ENCODE measurements at regions of chr6 and their contacts with region 1.

Region 1: GRCh38 chr6:69835414-69836179 is 30.8 kb upstream of the COL19A1 start:
- DNase-seq: no peak
- ATAC-seq: peak; percentile 88
- H3K4me3 Mint-ChIP-seq: no peak overlapping the region
- H3K27ac Mint-ChIP-seq: peak overlapping the region; percentile 57
- H3K4me1 Mint-ChIP-seq: peaks cover 20% of the 10 kb centered on the region
- H3K27me3 Mint-ChIP-seq: no peaks in the 10 kb centered on the region
- CTCF ChIP-seq: peak; percentile 81

Region 2: GRCh38 chr6:69732640-69733039 is 103.0 kb before region 1 on chr6:
- CTCF ChIA-PET with region 1: no interaction called
- POLR2A ChIA-PET with region 1: no interaction called
- intact Hi-C with region 1: loop called (anchors 1 kb)
- DNase-seq: no peak
- ATAC-seq: peak; percentile 64
- H3K4me3 Mint-ChIP-seq: no peak overlapping the region
- H3K27ac Mint-ChIP-seq: no peak overlapping the region
- H3K4me1 Mint-ChIP-seq: peaks cover 13% of the 10 kb centered on the region
- H3K27me3 Mint-ChIP-seq: no peaks in the 10 kb centered on the region
- CTCF ChIP-seq: no peak

Region 3: GRCh38 chr6:69756366-69756765 is 79.2 kb before region 1 on chr6:
- CTCF ChIA-PET with region 1: no interaction called
- POLR2A ChIA-PET with region 1: no interaction called
- intact Hi-C with region 1: no loop called
- DNase-seq: no peak
- ATAC-seq: no peak
- H3K4me3 Mint-ChIP-seq: no peak overlapping the region
- H3K27ac Mint-ChIP-seq: no peak overlapping the region
- H3K4me1 Mint-ChIP-seq: peaks cover 46% of the 10 kb centered on the region
- H3K27me3 Mint-ChIP-seq: no peaks in the 10 kb centered on the region
- CTCF ChIP-seq: no peak

Region 4: DNA sequence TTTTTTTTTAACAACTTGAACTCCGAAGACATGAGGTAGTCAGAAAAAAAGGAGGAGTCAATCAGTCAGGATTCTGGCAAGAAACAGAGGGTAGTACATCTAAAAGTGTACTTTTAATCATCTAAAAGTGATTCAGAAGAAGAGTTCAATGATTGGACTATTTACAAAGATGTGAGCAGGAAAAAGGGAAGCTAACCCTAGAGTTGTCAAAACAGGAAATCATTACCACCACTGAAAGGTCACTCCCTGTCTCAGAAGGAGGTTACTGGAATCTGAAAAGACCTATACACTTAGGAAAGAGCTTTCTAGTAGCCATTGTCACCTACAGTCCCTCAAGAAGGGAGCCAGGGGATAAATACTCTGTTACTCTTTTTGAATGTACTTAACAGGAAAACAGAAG is 22.1 kb before region 1 on chr6:
- CTCF ChIA-PET with region 1: interaction called, 4 read pairs
- POLR2A ChIA-PET with region 1: interaction called, 3 read pairs
- intact Hi-C with region 1: loop called (anchors 1 kb)
- DNase-seq: no peak
- ATAC-seq: peak; percentile 56
- H3K4me3 Mint-ChIP-seq: peak overlapping the region; percentile 56
- H3K27ac Mint-ChIP-seq: peak overlapping the region; percentile 97
- H3K4me1 Mint-ChIP-seq: peaks cover 79% of the 10 kb centered on the region
- H3K27me3 Mint-ChIP-seq: no peaks in the 10 kb centered on the region
- CTCF ChIP-seq: no peak

Region 5: DNA sequence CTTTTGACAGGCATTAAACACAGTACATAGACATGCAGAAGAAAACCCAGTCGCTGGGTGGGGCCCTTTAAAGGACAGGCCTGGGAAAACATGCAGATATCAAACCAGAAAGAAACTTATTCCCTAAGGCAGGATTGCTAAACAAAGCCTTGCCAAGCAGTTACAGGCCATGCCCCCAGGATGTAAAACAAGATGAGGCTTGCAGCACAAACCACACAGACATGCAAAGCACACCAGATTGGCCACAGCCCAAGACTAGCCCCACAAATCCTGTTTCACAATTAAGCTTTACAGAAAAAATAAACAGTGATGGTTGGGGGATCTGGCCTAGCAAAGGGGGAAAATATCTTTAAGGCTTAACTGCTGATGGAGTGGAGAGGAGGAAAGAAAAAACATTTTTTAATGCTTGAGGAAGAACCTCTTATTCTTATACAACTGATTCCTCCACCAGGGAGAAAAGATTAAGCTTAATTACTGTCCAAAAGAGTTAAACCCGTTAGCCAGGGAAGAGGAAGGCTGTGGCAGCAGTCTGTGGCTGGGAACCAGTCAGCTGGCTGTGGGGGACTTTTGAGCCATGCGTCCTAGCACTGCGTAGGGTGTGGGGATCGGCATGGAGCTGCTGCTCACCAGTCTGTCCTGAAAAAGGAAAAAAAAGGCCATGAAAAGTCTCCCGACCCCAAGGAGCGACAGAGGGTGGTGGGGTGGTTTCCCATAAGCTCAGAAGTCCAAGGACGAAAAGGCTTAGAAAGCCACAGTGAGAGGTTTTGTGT is 59.2 kb after region 1 on chr6:
- CTCF ChIA-PET with region 1: no interaction called
- POLR2A ChIA-PET with region 1: no interaction called
- intact Hi-C with region 1: no loop called
- DNase-seq: no peak
- ATAC-seq: peak; percentile 49
- H3K4me3 Mint-ChIP-seq: peak overlapping the region; percentile 32
- H3K27ac Mint-ChIP-seq: peak overlapping the region; percentile 71
- H3K4me1 Mint-ChIP-seq: peaks cover 57% of the 10 kb centered on the region
- H3K27me3 Mint-ChIP-seq: no peaks in the 10 kb centered on the region
- CTCF ChIP-seq: no peak

Region 6: DNA sequence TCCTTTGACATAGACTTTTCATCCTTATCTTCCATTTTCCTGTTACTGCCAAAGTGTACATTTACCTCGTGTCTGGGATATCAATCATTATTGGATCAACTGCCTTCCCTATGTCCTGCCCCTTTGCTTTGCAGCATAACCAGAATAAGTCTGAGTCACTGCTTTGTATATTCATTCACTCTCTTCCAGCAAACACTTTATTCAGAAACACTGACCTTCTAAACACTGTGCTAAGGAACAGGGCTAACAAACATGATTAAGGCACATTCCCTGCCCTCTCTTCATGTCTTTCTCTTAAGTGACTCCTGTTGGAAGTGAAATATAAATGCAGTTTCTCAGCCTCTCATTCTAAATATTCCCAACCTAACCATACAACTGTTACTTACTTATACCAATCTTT is 97.6 kb after region 1 on chr6:
- CTCF ChIA-PET with region 1: no interaction called
- POLR2A ChIA-PET with region 1: no interaction called
- intact Hi-C with region 1: loop called (anchors 1 kb)
- DNase-seq: no peak
- ATAC-seq: no peak
- H3K4me3 Mint-ChIP-seq: no peak overlapping the region
- H3K27ac Mint-ChIP-seq: peak overlapping the region; percentile 8
- H3K4me1 Mint-ChIP-seq: peaks cover 13% of the 10 kb centered on the region
- H3K27me3 Mint-ChIP-seq: no peaks in the 10 kb centered on the region
- CTCF ChIP-seq: no peak

Region 7: DNA sequence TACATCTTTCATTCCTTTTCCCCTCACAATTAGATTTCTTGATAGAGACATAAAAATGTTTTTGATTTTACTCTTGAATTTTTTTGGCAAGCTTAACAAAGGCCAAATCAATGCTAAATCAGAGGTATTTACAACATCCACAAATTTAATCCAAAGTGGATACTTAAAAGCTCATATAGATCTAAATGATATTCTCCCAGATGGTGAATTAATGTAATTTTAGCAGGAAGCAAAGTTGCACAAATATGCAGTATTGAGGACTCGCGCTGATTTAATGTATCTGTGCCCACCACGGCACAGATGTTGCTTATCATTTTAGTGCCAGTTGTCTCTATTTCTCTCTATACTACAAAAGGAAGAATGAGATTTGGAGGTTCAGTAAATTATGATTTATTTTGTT is 198.2 kb after region 1 on chr6:
- CTCF ChIA-PET with region 1: interaction called, 3 read pairs
- POLR2A ChIA-PET with region 1: no interaction called
- intact Hi-C with region 1: loop called (anchors 5 kb)
- DNase-seq: no peak
- ATAC-seq: no peak
- H3K4me3 Mint-ChIP-seq: no peak overlapping the region
- H3K27ac Mint-ChIP-seq: no peak overlapping the region
- H3K4me1 Mint-ChIP-seq: no peaks in the 10 kb centered on the region
- H3K27me3 Mint-ChIP-seq: no peaks in the 10 kb centered on the region
- CTCF ChIP-seq: no peak

Region 8: GRCh38 chr6:70166088-70166958 is 330.7 kb after region 1 on chr6:
- CTCF ChIA-PET with region 1: interaction called, 5 read pairs
- POLR2A ChIA-PET with region 1: no interaction called
- intact Hi-C with region 1: loop called (anchors 1 kb)
- DNase-seq: no peak
- ATAC-seq: peak; percentile 52
- H3K4me3 Mint-ChIP-seq: no peak overlapping the region
- H3K27ac Mint-ChIP-seq: peak overlapping the region; percentile 4
- H3K4me1 Mint-ChIP-seq: no peaks in the 10 kb centered on the region
- H3K27me3 Mint-ChIP-seq: no peaks in the 10 kb centered on the region
- CTCF ChIP-seq: no peak